Sigmoid colon (tissue), 7 donors: ENCODE measurements at regions of chr6 and their contacts with region 1.

Region 1: GRCh38 chr6:72411872-72412708 is 209.8 kb upstream of the KCNQ5 start:
- DNase-seq: peak; percentile 85
- H3K4me3 ChIP-seq: no peak overlapping the region
- H3K27ac ChIP-seq: no peak overlapping the region
- H3K4me1 ChIP-seq: no peaks in the 10 kb centered on the region
- H3K27me3 ChIP-seq: no peaks in the 10 kb centered on the region
- CTCF ChIP-seq: peak; percentile 96 to 100 (median 100)
- EP300 ChIP-seq: no peak
- POLR2A ChIP-seq: no peak

Region 2: DNA sequence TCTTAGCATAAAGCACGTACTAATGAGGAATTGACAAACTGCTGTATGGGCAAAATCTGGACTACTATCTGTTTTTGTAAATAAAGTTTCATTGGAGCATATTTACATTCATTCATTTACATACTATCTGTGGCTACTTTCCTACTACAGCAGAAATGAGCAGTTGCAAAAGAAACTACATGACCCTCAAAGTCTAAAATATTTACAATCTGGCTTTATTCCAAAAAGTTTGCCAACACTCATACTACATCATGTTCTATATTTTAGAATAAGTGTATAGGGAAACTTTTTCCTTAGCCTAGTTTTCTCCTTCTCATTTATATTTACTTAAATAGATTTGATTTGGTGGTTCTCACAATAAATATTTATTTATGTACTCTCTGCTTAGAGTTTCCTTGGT is 317.6 kb before region 1 on chr6:
- intact Hi-C with region 1: no loop called
- DNase-seq: no peak
- H3K4me3 ChIP-seq: no peak overlapping the region
- H3K27ac ChIP-seq: no peak overlapping the region
- H3K4me1 ChIP-seq: no peaks in the 10 kb centered on the region
- H3K27me3 ChIP-seq: no peaks in the 10 kb centered on the region
- CTCF ChIP-seq: no peak
- EP300 ChIP-seq: no peak
- POLR2A ChIP-seq: no peak

Region 3: GRCh38 chr6:73180763-73181619 is 768.9 kb after region 1 on chr6:
- intact Hi-C with region 1: loop called (anchors 5 kb)
- DNase-seq: no peak
- H3K4me3 ChIP-seq: peak overlapping the region in 3 of 4 donors; percentile 20 to 31 (median 23)
- H3K27ac ChIP-seq: no peak overlapping the region
- H3K4me1 ChIP-seq: peaks cover 0 to 6% (median 0%) of the 10 kb centered on the region in 4 donors
- H3K27me3 ChIP-seq: no peaks in the 10 kb centered on the region
- CTCF ChIP-seq: peak; percentile 18 to 73 (median 60)
- EP300 ChIP-seq: no peak
- POLR2A ChIP-seq: no peak